CD4-positive, alpha-beta memory T cell (primary cell): ENCODE measurements at regions of chr11 and their contacts with region 1.

Region 1: GRCh38 chr11:118283756-118284350 is 19.8 kb upstream of the MPZL2 start:
- DNase-seq: peak in 1 of 5 donors; percentile 14
- H3K4me3 ChIP-seq: no peak overlapping the region
- H3K4me3 Mint-ChIP-seq: peak overlapping the region in 4 of 8 donors; percentile 3 to 51 (median 25)
- H3K27ac ChIP-seq: no peak overlapping the region
- H3K27ac Mint-ChIP-seq: peak overlapping the region; percentile 5 to 76 (median 15)
- H3K4me1 ChIP-seq: peaks cover 23% of the 10 kb centered on the region
- H3K4me1 Mint-ChIP-seq: peaks cover 18 to 30% (median 25%) of the 10 kb centered on the region in 4 donors
- H3K27me3 ChIP-seq: no peaks in the 10 kb centered on the region
- H3K27me3 Mint-ChIP-seq: no peaks in the 10 kb centered on the region

Region 2: DNA sequence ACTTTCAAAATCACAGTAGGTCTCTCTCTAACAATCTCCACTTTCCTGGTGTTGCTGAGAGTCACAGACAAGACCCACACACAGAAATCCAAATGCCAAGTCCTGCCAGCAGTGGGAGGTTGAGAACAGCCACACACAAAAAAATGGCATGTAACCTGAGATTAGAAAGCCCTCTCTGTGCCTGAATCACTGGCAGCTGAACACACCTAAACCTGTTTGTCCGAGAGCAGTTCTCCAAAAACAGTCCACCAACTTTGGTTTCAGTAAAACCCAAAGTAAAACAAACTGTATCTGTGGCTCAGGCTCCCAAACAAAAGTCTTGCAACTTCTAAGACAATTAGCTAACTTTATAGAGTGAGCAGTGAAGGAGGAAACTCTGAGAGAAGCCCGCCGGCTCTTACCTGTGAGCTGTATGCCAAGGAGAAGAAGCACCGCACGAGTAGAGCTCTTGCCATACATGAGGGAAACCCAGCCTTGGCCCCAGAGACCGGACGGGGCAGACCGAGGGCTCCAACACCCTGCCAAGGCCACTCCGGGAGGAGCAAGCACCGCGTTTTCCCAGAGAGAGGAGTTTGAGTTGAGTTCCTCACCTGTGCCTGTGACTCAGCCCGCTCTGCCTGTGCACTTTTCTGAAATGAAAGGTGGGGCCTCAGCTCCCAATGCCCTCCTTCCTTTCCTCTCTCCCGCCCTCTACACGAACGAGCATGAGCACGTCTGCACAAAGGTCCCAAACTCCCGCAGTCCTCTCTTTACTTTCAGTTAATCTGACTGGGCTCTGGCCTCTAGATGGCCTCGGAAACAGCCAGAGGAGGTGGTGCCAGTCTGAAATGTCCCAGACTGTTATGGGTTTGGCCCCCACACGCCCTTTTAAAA is 19.9 kb before region 1 on chr11 and contains the start of gene MPZL2:
- CTCF ChIA-PET with region 1: interaction called, 11 read pairs
- POLR2A ChIA-PET with region 1: no interaction called
- intact Hi-C with region 1: no loop called
- DNase-seq: peak in 1 of 5 donors; percentile 48
- H3K4me3 ChIP-seq: peak within 1 kb of the TSS in 1 of 2 donors; percentile 13
- H3K4me3 Mint-ChIP-seq: peak within 1 kb of the TSS; percentile 61 to 89 (median 84)
- H3K27ac ChIP-seq: no peak within 1 kb of the TSS
- H3K27ac Mint-ChIP-seq: peak within 1 kb of the TSS in 6 of 7 donors; percentile 39 to 89 (median 74)
- H3K4me1 ChIP-seq: peaks cover 29% of the 10 kb centered on the region
- H3K4me1 Mint-ChIP-seq: peaks cover 11 to 44% (median 23%) of the 10 kb centered on the region in 4 donors
- H3K27me3 ChIP-seq: no peaks in the 10 kb centered on the region
- H3K27me3 Mint-ChIP-seq: peaks cover 0 to 1% of the 10 kb centered on the region in 2 donors
- total RNA-seq, gene MPZL2: 2.9 to 3.7 TPM

Region 3: GRCh38 chr11:118415739-118416284 is 132.0 kb after region 1 on chr11:
- CTCF ChIA-PET with region 1: no interaction called
- POLR2A ChIA-PET with region 1: no interaction called
- intact Hi-C with region 1: no loop called
- DNase-seq: peak in 1 of 5 donors; percentile 46
- H3K4me3 ChIP-seq: no peak overlapping the region
- H3K4me3 Mint-ChIP-seq: no peak overlapping the region
- H3K27ac ChIP-seq: no peak overlapping the region
- H3K27ac Mint-ChIP-seq: no peak overlapping the region
- H3K4me1 ChIP-seq: no peaks in the 10 kb centered on the region
- H3K4me1 Mint-ChIP-seq: peaks cover 0 to 4% (median 0%) of the 10 kb centered on the region in 4 donors
- H3K27me3 ChIP-seq: no peaks in the 10 kb centered on the region
- H3K27me3 Mint-ChIP-seq: no peaks in the 10 kb centered on the region